Naive thymus-derived CD4-positive, alpha-beta T cell (primary cell): ENCODE measurements at regions of chr1 and their contacts with region 1.

Region 1: DNA sequence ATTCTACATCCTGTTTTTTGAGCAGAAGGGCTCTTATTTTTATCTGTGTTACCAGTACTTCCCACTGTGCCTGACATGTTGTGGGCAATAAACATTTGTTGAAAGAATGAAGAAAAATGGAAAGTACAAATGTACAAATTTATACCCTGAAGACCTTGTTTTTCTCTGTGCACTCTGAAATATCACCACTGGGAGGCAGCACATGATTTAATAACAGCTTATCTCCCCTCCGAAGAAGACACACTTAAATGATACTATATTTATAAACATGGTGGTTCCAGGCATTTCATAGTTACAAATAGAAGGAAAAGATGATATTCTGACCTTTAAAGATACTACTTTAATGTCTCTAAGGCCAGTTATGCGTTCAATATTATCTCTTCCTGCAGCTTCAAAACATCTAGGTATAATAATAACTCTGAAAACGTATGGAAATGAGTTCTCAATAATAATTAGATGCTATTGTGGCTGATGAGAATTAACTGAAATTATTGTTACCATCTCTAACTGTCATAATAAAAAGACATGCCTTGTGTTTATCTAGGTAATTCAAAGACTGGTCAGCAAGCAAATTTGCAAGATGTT is 12.8 kb downstream of the DYNLT5 start:
- DNase-seq: peak in 7 of 9 donors; percentile 48 to 68 (median 62)
- ATAC-seq: peak; percentile 81
- H3K4me3 ChIP-seq: no peak overlapping the region
- H3K4me3 Mint-ChIP-seq: no peak overlapping the region
- H3K27ac ChIP-seq: no peak overlapping the region
- H3K27ac Mint-ChIP-seq: no peak overlapping the region
- H3K4me1 ChIP-seq: no peaks in the 10 kb centered on the region
- H3K4me1 Mint-ChIP-seq: peaks cover 7 to 21% (median 15%) of the 10 kb centered on the region in 7 donors
- H3K27me3 ChIP-seq: no peaks in the 10 kb centered on the region
- H3K27me3 Mint-ChIP-seq: peaks cover 0 to 3% (median 0%) of the 10 kb centered on the region in 5 donors

Region 2: GRCh38 chr1:66747501-66747900 is 17.6 kb before region 1 on chr1:
- CTCF ChIA-PET with region 1: no interaction called
- POLR2A ChIA-PET with region 1: no interaction called
- intact Hi-C with region 1: no loop called
- DNase-seq: no peak
- ATAC-seq: no peak
- H3K4me3 ChIP-seq: no peak overlapping the region
- H3K4me3 Mint-ChIP-seq: no peak overlapping the region
- H3K27ac ChIP-seq: no peak overlapping the region
- H3K27ac Mint-ChIP-seq: no peak overlapping the region
- H3K4me1 ChIP-seq: peaks cover 0 to 11% of the 10 kb centered on the region in 2 donors
- H3K4me1 Mint-ChIP-seq: peaks cover 7 to 18% (median 11%) of the 10 kb centered on the region in 7 donors
- H3K27me3 ChIP-seq: no peaks in the 10 kb centered on the region
- H3K27me3 Mint-ChIP-seq: peaks cover 34 to 72% (median 41%) of the 10 kb centered on the region in 5 donors

Region 3: DNA sequence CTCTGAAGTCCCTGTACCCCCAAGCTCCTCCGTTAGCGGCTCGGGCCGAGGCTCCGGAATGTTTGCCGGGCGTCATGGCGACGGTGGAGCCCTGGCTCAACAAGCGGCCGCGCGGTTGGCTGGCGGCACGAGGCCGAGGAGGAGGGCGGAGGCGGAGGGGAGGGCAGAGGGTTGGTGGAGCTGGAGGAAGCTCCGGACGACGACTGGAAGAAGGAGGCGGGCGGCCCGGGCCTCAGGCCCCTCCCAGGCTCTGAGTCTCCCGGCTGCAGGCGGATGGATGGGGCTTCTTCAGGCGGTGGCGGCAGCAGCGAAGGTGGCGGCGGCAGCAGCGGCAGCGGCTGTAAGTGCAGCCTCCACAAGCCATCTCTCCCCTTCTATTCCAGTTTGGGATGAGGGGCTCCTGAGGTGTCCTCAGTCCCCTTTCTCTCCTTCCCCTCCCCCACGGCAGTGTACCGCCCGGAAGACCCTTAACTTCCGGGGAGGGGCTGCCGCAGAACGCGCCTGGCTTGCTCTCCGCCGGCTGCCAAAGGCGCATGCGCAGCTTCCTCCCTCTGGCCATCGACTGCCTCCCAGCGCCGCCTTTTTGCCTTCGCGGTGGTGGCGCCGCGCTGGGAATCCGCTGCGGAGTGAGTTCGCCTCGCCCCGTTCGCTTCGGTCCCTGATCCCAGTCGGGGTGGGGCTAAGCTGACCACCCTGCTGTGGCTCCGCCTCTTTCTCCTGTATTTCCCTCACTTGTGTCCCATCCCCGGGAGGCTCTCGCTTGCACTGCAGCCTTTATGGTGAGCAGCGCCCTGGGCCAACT is 159.9 kb after region 1 on chr1 and contains the starts of genes DNAI4 and MIER1:
- CTCF ChIA-PET with region 1: interaction called, 8 read pairs
- POLR2A ChIA-PET with region 1: interaction called, 4 read pairs
- intact Hi-C with region 1: loop called (anchors 1 to 2 kb)
- DNase-seq: peak; percentile 91 to 98 (median 96)
- ATAC-seq: peak; percentile 97
- H3K4me3 ChIP-seq: peak within 1 kb of the TSS; percentile 83
- H3K4me3 Mint-ChIP-seq: peak within 1 kb of the TSS; percentile 92 to 98 (median 96)
- H3K27ac ChIP-seq: peak within 1 kb of the TSS; percentile 95
- H3K27ac Mint-ChIP-seq: peak within 1 kb of the TSS; percentile 95 to 97 (median 97)
- H3K4me1 ChIP-seq: peaks cover 24 to 37% of the 10 kb centered on the region in 2 donors
- H3K4me1 Mint-ChIP-seq: peaks cover 18 to 75% (median 60%) of the 10 kb centered on the region in 7 donors
- H3K27me3 ChIP-seq: no peaks in the 10 kb centered on the region
- H3K27me3 Mint-ChIP-seq: no peaks in the 10 kb centered on the region
- total RNA-seq, gene DNAI4: 1.3 to 10.7 (median 9.7) TPM
- total RNA-seq, gene MIER1: 51.5 to 73.6 (median 70.9) TPM

Region 4: DNA sequence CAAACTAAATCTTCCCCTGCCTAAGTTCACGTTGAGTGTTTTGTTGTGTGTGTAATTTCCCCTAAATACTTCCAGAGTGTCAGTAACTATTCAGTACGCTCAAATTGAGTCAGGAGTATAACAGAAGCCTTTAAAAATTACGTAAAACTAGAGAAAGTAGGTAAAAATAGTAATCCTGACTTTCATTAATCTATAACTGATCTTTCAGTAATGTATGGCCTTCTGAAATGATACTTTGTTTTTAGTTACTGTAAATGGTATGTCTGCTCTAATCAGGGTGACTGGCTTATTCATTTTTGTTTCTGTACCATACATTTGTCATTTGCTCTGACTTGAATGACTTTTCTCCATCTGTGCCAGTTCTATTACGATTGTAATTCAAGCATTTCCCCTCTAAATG is 189.1 kb after region 1 on chr1:
- CTCF ChIA-PET with region 1: interaction called, 3 read pairs
- POLR2A ChIA-PET with region 1: no interaction called
- intact Hi-C with region 1: loop called in 1 of 2 experiments (anchors 5 kb)
- DNase-seq: no peak
- ATAC-seq: no peak
- H3K4me3 ChIP-seq: no peak overlapping the region
- H3K4me3 Mint-ChIP-seq: no peak overlapping the region
- H3K27ac ChIP-seq: no peak overlapping the region
- H3K27ac Mint-ChIP-seq: peak overlapping the region in 6 of 9 donors; percentile 3 to 83 (median 62)
- H3K4me1 ChIP-seq: no peaks in the 10 kb centered on the region
- H3K4me1 Mint-ChIP-seq: peaks cover 9 to 73% (median 56%) of the 10 kb centered on the region in 7 donors
- H3K27me3 ChIP-seq: no peaks in the 10 kb centered on the region
- H3K27me3 Mint-ChIP-seq: no peaks in the 10 kb centered on the region

Region 5: GRCh38 chr1:66996018-66996682 is 231.1 kb after region 1 on chr1:
- CTCF ChIA-PET with region 1: interaction called, 4 read pairs
- POLR2A ChIA-PET with region 1: interaction called, 4 read pairs
- intact Hi-C with region 1: loop called (anchors 1 to 2 kb)
- DNase-seq: peak; percentile 14 to 75 (median 63)
- ATAC-seq: peak; percentile 93
- H3K4me3 ChIP-seq: no peak overlapping the region
- H3K4me3 Mint-ChIP-seq: no peak overlapping the region
- H3K27ac ChIP-seq: no peak overlapping the region
- H3K27ac Mint-ChIP-seq: peak overlapping the region in 5 of 9 donors; percentile 7 to 78 (median 74)
- H3K4me1 ChIP-seq: peaks cover 0 to 5% of the 10 kb centered on the region in 2 donors
- H3K4me1 Mint-ChIP-seq: peaks cover 4 to 24% (median 23%) of the 10 kb centered on the region in 7 donors
- H3K27me3 ChIP-seq: no peaks in the 10 kb centered on the region
- H3K27me3 Mint-ChIP-seq: no peaks in the 10 kb centered on the region

Region 6: DNA sequence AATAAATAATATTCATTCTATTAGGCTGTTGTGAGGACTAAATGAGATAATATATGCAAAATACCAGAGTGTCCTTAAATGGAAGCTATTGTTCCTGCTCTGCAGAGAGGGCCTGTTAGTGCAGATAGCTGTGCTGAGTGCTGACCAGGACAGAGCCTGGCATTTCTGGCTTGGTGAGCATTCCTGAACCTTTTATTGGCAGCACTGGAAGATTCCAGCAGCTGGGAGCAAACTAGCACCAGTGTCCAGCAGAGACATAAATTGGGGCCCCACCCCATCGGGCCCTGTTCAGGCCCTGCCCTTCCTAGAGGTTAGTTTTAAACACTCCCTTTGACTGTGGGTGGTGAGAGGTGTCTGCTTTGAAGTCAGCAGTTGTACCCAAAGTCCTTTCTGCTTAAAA is 834.0 kb after region 1 on chr1:
- CTCF ChIA-PET with region 1: no interaction called
- POLR2A ChIA-PET with region 1: no interaction called
- intact Hi-C with region 1: no loop called
- DNase-seq: no peak
- ATAC-seq: no peak
- H3K4me3 ChIP-seq: no peak overlapping the region
- H3K4me3 Mint-ChIP-seq: no peak overlapping the region
- H3K27ac ChIP-seq: no peak overlapping the region
- H3K27ac Mint-ChIP-seq: no peak overlapping the region
- H3K4me1 ChIP-seq: no peaks in the 10 kb centered on the region
- H3K4me1 Mint-ChIP-seq: no peaks in the 10 kb centered on the region
- H3K27me3 ChIP-seq: no peaks in the 10 kb centered on the region
- H3K27me3 Mint-ChIP-seq: peaks cover 0 to 14% (median 10%) of the 10 kb centered on the region in 5 donors